Cardiac septum (tissue), 1 donor: ENCODE measurements at regions of chr3 and their contacts with region 1.

Region 1: GRCh38 chr3:20739814-20740213 is 553.8 kb upstream of the SGO1 start:
- DNase-seq: no peak

Region 2: DNA sequence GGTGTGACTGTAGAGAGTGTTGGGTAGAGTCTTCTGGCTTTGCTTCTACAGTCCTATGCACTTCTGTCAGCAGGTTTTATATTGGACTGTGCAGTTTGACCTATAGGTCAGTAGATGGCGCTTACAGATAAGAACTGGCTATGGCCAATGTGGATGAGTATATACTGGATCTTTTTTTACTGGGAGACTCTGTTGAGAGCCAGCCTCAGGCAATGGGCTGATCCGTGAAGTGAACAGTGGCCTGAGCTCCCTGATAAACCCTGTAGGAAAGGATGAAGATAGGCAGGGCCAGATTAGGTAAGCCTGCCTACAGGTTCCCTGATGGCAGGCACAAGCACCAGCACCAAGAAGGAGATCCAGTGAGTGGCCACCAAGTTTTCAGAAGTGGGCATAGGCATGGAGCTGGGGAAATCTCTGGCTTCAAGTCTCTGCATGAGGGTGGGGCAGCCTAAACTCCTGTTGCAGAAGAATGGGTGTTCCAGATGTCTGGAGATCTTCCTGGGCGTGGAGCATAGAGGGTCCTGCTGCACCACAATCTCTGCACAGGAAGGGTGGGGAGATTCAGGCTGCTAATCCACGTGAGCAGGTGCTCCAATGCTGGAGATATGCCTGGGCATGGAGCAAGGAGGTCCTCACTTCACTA is 227.8 kb before region 1 on chr3:
- intact Hi-C with region 1: loop called (anchors 5 kb)
- DNase-seq: no peak

Region 3: DNA sequence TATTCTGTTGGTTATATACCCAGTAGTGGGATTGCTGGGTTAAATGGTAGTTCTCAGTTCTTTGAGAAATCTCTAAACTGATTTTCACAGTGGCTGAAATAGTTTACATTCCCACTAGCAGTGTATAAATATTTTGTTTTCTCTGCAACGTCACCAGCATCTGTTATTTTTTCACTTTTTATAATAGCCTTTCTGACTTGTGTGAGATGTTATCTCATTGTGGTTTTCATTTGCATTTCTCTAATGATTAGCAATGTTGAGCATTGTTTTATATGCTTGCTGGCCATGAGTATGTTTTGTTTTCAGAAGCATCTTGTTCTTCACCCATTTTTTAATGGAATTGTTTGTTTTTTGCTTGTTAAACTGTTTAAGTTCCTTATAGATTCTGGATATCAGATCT is 58.9 kb after region 1 on chr3:
- intact Hi-C with region 1: no loop called
- DNase-seq: no peak